ENCODE measurements at regions of chr3 and their contacts with region 1.

Region 1: GRCh38 chr3:180802837-180803236 is 109.6 kb upstream of the FXR1 start:
- DNase-seq: no peak
- H3K4me3 ChIP-seq: no peak overlapping the region
- H3K27ac ChIP-seq: no peak overlapping the region
- H3K4me1 ChIP-seq: peaks cover 0 to 7% (median 5%) of the 10 kb centered on the region in 4 donors
- H3K27me3 ChIP-seq: no peaks in the 10 kb centered on the region
- CTCF ChIP-seq: peak; percentile 10 to 51 (median 38)
- EP300 ChIP-seq: no peak
- POLR2A ChIP-seq: no peak

Region 2: GRCh38 chr3:180492047-180492446 is 310.8 kb before region 1 on chr3:
- intact Hi-C with region 1: no loop called
- DNase-seq: no peak
- H3K4me3 ChIP-seq: no peak overlapping the region
- H3K27ac ChIP-seq: no peak overlapping the region
- H3K4me1 ChIP-seq: no peaks in the 10 kb centered on the region
- H3K27me3 ChIP-seq: no peaks in the 10 kb centered on the region
- CTCF ChIP-seq: no peak
- EP300 ChIP-seq: no peak
- POLR2A ChIP-seq: no peak

Region 3: GRCh38 chr3:181176601-181177000 is 373.8 kb after region 1 on chr3:
- intact Hi-C with region 1: loop called (anchors 5 kb)
- DNase-seq: no peak
- H3K4me3 ChIP-seq: no peak overlapping the region
- H3K27ac ChIP-seq: no peak overlapping the region
- H3K4me1 ChIP-seq: peaks cover 0 to 8% (median 5%) of the 10 kb centered on the region in 4 donors
- H3K27me3 ChIP-seq: no peaks in the 10 kb centered on the region
- CTCF ChIP-seq: peak; percentile 48 to 74 (median 51)
- EP300 ChIP-seq: no peak
- POLR2A ChIP-seq: no peak

Region 4: GRCh38 chr3:181431748-181432147 is 628.9 kb after region 1 on chr3:
- intact Hi-C with region 1: no loop called
- DNase-seq: no peak
- H3K4me3 ChIP-seq: no peak overlapping the region
- H3K27ac ChIP-seq: no peak overlapping the region
- H3K4me1 ChIP-seq: no peaks in the 10 kb centered on the region
- H3K27me3 ChIP-seq: no peaks in the 10 kb centered on the region
- CTCF ChIP-seq: no peak
- EP300 ChIP-seq: no peak
- POLR2A ChIP-seq: no peak

Measured in esophagus muscularis mucosa (tissue), 4 donors.